Mammary epithelial cell (primary cell): ENCODE measurements at regions of chr3 and their contacts with region 1.

Region 1: DNA sequence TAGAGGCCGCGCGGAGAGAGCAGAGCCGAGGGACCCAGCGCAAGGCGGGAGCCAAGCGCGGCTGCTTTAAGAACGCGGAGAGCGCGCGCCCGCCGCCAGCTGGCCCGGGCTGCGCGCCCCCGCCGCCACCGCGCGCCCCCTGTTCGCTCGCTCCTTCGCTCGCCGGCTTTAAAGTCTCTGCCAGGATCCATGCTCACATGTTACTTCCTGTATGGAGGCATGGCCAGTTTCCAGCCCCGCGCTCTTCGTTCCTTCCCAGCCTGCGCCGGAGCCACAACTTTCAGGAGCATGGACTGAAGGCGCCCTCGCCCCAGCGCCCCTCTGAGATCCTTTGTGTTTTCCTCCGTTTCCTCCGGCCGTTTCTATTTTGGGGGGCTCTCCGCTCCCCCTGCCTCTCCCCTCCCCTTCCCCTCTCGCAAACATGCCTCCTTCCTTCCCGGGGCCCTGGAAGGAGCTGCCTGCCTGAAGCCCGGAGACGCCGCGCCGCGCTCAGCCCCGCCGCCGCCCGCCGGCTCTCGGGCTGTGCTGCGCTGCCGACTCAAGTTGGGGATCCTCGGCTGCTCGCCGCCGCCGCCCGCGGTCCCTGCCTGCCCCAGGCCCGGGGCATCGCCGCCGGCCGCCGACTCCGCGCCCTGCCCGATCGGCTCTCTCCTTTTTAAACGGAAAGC is at the start of gene PTPRG:
- DNase-seq: peak; percentile 87
- H3K4me3 ChIP-seq: peak within 1 kb of the TSS; percentile 77 to 90 (median 88)
- H3K27ac ChIP-seq: peak within 1 kb of the TSS; percentile 77
- H3K4me1 ChIP-seq: peaks cover 24% of the 10 kb centered on the region
- H3K27me3 ChIP-seq: no peaks in the 10 kb centered on the region
- CTCF ChIP-seq: no peak
- total RNA-seq, gene PTPRG: 10.5 to 31.2 TPM

Region 2: DNA sequence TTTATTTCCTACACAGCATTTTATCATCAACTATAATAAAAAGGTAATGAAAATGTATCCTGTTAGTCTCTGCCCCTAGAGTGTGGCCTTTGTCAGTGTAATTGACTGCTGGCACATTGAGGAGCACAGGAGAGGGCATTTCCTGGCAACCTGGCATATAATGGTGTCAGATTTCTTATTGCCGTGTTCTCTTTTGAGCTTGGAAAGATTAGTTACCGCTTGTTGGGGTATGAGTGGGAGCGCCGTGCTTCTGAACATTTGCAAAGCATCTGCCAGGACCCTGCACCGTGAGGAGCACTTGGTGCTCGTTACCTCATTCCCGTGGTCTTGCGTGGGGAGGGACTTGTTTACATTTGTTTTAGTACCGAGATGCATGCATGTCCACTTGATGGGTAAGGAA is 124.2 kb after region 1 on chr3:
- CTCF ChIA-PET with region 1: no interaction called
- dilution Hi-C with region 1: no loop called
- in situ Hi-C with region 1: no loop called
- intact Hi-C with region 1: loop called (anchors 2 kb)
- DNase-seq: peak; percentile 42
- H3K4me3 ChIP-seq: peak overlapping the region in 1 of 3 experiments; percentile 2
- H3K27ac ChIP-seq: peak overlapping the region; percentile 17
- H3K4me1 ChIP-seq: peaks cover 33% of the 10 kb centered on the region
- H3K27me3 ChIP-seq: no peaks in the 10 kb centered on the region
- CTCF ChIP-seq: no peak

Region 3: DNA sequence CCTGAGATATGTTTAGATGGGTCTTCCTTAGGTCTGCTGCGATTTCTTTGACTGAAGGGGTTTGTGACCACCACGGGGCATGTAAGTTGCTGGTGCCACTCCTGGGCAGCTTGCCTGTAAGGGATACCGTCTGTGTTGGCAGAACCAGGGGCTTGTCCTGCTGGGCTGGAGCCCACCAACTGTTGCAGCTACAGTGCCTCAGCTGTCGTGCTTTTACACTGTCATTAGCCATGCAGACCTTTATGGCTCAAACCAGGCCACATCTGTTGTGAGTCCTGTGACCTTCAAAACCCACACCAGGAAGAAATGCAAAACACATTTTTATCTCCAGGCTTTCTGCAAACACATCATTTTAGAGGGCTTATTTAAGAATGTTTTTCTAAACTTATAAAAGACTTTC is 168.5 kb after region 1 on chr3:
- CTCF ChIA-PET with region 1: no interaction called
- dilution Hi-C with region 1: no loop called
- in situ Hi-C with region 1: no loop called
- intact Hi-C with region 1: loop called (anchors 10 kb)
- DNase-seq: no peak
- H3K4me3 ChIP-seq: no peak overlapping the region
- H3K27ac ChIP-seq: no peak overlapping the region
- H3K4me1 ChIP-seq: no peaks in the 10 kb centered on the region
- H3K27me3 ChIP-seq: no peaks in the 10 kb centered on the region
- CTCF ChIP-seq: no peak

Region 4: DNA sequence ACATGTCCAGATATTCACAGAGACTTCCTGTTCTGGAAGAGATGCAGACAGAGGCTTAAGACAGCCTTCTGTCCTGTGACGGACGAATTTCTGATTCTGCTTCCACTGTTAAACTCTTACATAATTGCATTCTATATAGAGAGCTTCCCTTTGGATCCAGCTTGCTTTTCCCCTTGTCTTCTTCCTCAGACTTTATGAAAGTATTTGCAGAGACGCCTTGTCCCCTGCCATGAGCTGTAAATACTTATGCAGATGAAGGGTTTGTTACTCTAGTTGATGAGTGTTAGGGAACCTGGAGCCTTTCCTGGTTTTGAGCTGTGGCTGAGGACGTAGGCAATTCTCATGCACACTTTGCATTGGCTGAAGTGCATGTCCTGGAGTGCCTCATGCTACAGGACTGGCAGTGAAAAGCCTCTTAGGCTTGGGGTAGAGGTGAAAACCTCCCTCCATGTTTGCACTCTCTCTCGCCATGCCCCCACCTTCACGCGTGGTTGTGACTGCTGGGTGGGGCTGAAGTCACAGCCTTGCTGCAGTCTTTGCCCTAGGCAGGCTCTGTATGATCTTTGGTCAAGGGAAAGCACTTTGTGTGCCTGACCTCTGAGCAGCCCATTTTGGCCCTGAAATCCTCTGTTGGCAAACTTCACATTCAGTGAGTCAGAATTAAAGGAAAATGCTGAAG is 286.4 kb after region 1 on chr3:
- CTCF ChIA-PET with region 1: no interaction called
- dilution Hi-C with region 1: no loop called
- in situ Hi-C with region 1: loop called in 1 of 2 experiments (anchors 25 kb)
- intact Hi-C with region 1: no loop called
- DNase-seq: no peak
- H3K4me3 ChIP-seq: no peak overlapping the region
- H3K27ac ChIP-seq: no peak overlapping the region
- H3K4me1 ChIP-seq: peaks cover 19% of the 10 kb centered on the region
- H3K27me3 ChIP-seq: no peaks in the 10 kb centered on the region
- CTCF ChIP-seq: no peak

Region 5: DNA sequence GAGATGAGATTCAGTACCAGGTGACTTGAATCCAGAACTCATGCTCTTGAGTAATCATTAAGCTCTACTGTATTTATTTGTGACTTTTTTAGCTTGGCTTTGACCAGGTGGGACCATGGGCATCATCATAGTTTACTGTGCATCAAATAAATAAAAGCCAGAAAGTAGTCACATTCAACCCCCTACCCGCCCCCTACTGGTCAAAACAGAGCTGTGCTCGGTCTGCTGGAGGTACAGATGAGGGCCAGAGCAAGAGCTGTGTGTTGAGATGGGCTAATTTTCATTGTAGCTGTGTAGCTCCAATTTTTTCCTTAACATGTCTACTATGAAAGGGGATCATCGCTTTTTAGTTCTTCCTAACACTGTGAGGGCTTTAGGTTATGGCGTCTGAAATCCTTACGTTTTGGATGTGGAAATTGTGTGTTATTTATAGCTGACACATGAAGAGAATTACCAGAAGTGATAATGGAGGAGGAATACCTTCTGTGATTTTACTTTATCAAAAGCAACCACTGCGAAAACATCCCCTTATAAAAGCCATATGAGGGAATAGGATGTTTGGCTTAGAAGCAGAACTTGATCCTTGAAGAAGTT is 374.9 kb after region 1 on chr3:
- CTCF ChIA-PET with region 1: no interaction called
- dilution Hi-C with region 1: no loop called
- in situ Hi-C with region 1: no loop called
- intact Hi-C with region 1: loop called (anchors 5 kb)
- DNase-seq: no peak
- H3K4me3 ChIP-seq: no peak overlapping the region
- H3K27ac ChIP-seq: no peak overlapping the region
- H3K4me1 ChIP-seq: no peaks in the 10 kb centered on the region
- H3K27me3 ChIP-seq: no peaks in the 10 kb centered on the region
- CTCF ChIP-seq: peak; percentile 69 to 71

Region 6: GRCh38 chr3:62051507-62051906 is 490.0 kb after region 1 on chr3:
- CTCF ChIA-PET with region 1: no interaction called
- dilution Hi-C with region 1: loop called (anchors 10 kb)
- in situ Hi-C with region 1: no loop called
- intact Hi-C with region 1: loop called (anchors 2 kb)
- DNase-seq: peak; percentile 23
- H3K4me3 ChIP-seq: no peak overlapping the region
- H3K27ac ChIP-seq: no peak overlapping the region
- H3K4me1 ChIP-seq: no peaks in the 10 kb centered on the region
- H3K27me3 ChIP-seq: no peaks in the 10 kb centered on the region
- CTCF ChIP-seq: peak; percentile 38 to 60